IMR-90 (cell line): ENCODE measurements at regions of chr5 and their contacts with region 1.

Region 1: DNA sequence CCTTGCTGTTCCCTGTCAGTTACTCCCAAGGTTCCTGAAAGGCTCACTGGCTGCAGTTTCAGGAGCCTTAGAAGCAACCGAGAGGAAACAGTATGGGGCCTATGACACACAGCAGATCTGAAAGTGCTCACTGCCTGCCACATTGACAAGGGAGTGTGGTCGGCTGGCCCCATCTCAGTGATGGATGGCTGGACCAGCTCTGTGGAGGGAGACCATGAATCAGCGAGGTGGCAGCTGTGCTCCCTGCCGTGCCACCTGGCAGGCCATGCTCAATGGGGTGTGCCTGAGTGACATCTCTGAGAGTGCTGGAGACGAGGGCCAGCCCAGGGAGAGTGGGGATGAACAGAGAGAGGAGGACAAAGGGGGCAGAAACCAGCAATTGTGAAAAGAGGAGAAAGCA is 49.1 kb downstream of the DOCK2 start:
- DNase-seq: no peak
- ATAC-seq: no peak
- H3K4me3 ChIP-seq: no peak overlapping the region
- H3K27ac ChIP-seq: no peak overlapping the region
- H3K4me1 ChIP-seq: no peaks in the 10 kb centered on the region
- H3K27me3 ChIP-seq: no peaks in the 10 kb centered on the region
- CTCF ChIP-seq: no peak
- POLR2A ChIP-seq: no peak
- RAD21 ChIP-seq: no peak

Region 2: GRCh38 chr5:169591636-169592035 is 94.5 kb before region 1 on chr5:
- CTCF ChIA-PET with region 1: no interaction called
- POLR2A ChIA-PET with region 1: interaction called, 10 read pairs
- dilution Hi-C with region 1: no loop called
- in situ Hi-C with region 1: no loop called
- intact Hi-C with region 1: no loop called
- DNase-seq: peak; percentile 88
- ATAC-seq: peak; percentile 74
- H3K4me3 ChIP-seq: no peak overlapping the region
- H3K27ac ChIP-seq: no peak overlapping the region
- H3K4me1 ChIP-seq: peaks cover 3% of the 10 kb centered on the region; the same call in 1 of the 2 replicates
- H3K27me3 ChIP-seq: no peaks in the 10 kb centered on the region
- CTCF ChIP-seq: no peak
- POLR2A ChIP-seq: no peak
- RAD21 ChIP-seq: no peak